ENCODE measurements at regions of chr2 and their contacts with region 1.

Region 1: DNA sequence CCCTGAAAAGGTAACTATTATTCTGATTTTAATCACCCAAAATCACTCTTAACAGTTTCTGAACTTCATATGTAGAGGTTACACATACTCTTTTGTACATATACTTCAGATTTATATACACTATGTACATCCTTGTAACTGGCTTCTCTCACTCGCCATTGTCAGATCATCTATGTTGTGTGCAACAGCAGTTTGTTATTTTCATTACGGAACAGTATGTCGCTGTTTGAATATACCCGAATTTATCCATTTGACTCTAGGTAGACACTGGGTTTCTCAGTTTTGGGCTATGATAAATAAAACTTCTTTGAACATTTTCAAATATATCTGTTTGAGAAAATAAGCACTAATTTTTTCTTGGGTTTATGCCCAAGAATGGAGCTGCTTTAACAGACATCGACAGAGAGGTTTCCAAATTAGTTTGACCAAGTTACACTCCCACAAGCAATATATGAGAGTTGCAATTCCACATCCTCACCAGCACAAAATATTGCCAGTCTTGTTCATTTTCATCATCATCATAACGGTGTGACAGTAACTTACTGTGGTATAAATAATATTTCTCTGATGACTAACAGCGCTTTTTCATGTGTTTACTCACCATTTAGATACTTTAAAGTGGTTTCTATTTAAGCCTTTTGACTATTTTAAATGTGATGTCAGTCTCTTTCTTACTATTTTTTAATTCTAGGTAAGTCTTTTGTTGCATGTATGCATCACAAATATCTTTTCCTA is 80.9 kb downstream of the SMC6 start:
- DNase-seq: no peak
- H3K4me3 Mint-ChIP-seq: no peak overlapping the region
- H3K27ac Mint-ChIP-seq: no peak overlapping the region
- H3K4me1 Mint-ChIP-seq: no peaks in the 10 kb centered on the region
- H3K27me3 Mint-ChIP-seq: no peaks in the 10 kb centered on the region

Region 2: GRCh38 chr2:17470855-17471641 is 201.7 kb before region 1 on chr2:
- intact Hi-C with region 1: loop called (anchors 5 kb)
- DNase-seq: no peak
- H3K4me3 Mint-ChIP-seq: no peak overlapping the region
- H3K27ac Mint-ChIP-seq: peak overlapping the region; percentile 14
- H3K4me1 Mint-ChIP-seq: no peaks in the 10 kb centered on the region
- H3K27me3 Mint-ChIP-seq: no peaks in the 10 kb centered on the region